CD14-positive monocyte (primary cell): ENCODE measurements at regions of chr18 and their contacts with region 1.

Region 1: DNA sequence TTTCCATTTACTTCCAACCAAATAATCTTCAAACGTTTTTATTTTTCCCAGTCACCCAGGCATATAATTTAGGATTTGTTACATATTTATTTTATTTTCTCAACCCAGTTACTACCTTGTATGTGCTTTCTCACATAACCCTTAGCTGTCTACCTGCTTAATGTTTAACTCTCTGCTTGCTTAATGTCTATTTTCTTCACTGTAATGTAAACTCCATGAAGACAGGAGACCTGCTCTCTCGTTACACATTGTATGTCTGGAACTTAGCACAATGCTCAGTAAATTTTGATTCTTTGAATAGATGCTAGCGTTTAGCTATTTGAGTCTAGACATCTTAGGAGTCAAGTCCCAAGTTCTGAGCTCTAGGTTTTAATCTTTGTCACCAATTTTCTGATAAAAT is 70.2 kb downstream of the RBBP8 start:
- DNase-seq: no peak
- H3K4me3 ChIP-seq: no peak overlapping the region
- H3K4me3 Mint-ChIP-seq: no peak overlapping the region
- H3K27ac ChIP-seq: no peak overlapping the region
- H3K27ac Mint-ChIP-seq: no peak overlapping the region
- H3K4me1 ChIP-seq: no peaks in the 10 kb centered on the region
- H3K4me1 Mint-ChIP-seq: no peaks in the 10 kb centered on the region
- H3K27me3 ChIP-seq: no peaks in the 10 kb centered on the region
- H3K27me3 Mint-ChIP-seq: no peaks in the 10 kb centered on the region
- CTCF ChIP-seq: no peak

Region 2: DNA sequence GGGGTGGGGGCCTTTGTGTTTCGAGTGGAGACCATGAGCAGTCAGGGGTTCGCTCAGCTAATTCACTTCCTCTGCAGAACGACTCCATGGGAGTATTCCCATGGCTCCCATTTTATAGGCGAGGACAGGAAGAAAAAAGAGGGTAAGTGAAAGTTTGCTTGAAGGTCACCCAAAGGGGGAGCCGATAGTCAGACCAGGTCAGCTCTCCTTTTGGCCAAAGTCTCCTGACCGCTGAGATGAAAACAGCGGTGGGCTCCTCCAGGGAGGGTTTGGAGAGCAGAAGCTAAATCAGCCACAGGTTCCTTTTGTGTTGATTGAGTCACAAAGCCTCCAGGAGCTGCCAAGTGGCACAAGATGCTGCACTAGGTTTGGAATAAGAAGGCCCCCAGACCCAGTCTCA is 551.5 kb before region 1 on chr18:
- intact Hi-C with region 1: no loop called
- DNase-seq: no peak
- H3K4me3 ChIP-seq: no peak overlapping the region
- H3K4me3 Mint-ChIP-seq: no peak overlapping the region
- H3K27ac ChIP-seq: no peak overlapping the region
- H3K27ac Mint-ChIP-seq: no peak overlapping the region
- H3K4me1 ChIP-seq: no peaks in the 10 kb centered on the region
- H3K4me1 Mint-ChIP-seq: no peaks in the 10 kb centered on the region
- H3K27me3 ChIP-seq: no peaks in the 10 kb centered on the region
- H3K27me3 Mint-ChIP-seq: peaks cover 2 to 5% (median 2%) of the 10 kb centered on the region in 3 donors
- CTCF ChIP-seq: no peak

Region 3: DNA sequence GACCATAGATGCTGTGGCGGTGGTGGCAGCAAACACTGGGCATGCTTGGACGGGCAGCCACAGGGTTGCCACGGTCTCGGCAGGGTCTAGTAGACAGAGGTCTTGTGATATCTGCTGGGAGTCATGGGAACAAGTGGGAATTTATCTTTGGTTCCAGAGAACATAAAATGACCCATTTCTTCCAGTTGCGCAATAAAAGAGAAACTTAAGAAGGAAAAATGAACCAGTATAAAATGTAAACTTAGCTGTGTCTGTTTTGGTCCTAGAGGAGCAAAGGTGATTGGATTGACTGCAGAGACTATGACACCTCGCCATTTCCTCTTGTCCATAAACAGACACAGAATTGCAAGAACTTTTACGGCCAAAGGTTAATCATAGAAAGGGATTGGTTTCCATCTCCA is 202.7 kb before region 1 on chr18:
- intact Hi-C with region 1: loop called in 1 of 2 experiments (anchors 10 kb)
- DNase-seq: no peak
- H3K4me3 ChIP-seq: no peak overlapping the region
- H3K4me3 Mint-ChIP-seq: no peak overlapping the region
- H3K27ac ChIP-seq: no peak overlapping the region
- H3K27ac Mint-ChIP-seq: no peak overlapping the region
- H3K4me1 ChIP-seq: no peaks in the 10 kb centered on the region
- H3K4me1 Mint-ChIP-seq: no peaks in the 10 kb centered on the region
- H3K27me3 ChIP-seq: no peaks in the 10 kb centered on the region
- H3K27me3 Mint-ChIP-seq: peaks cover 2 to 4% (median 4%) of the 10 kb centered on the region in 3 donors
- CTCF ChIP-seq: no peak

Region 4: GRCh38 chr18:23183411-23184155 is 180.3 kb after region 1 on chr18:
- intact Hi-C with region 1: no loop called
- DNase-seq: no peak
- H3K4me3 ChIP-seq: no peak overlapping the region
- H3K4me3 Mint-ChIP-seq: no peak overlapping the region
- H3K27ac ChIP-seq: no peak overlapping the region
- H3K27ac Mint-ChIP-seq: no peak overlapping the region
- H3K4me1 ChIP-seq: no peaks in the 10 kb centered on the region
- H3K4me1 Mint-ChIP-seq: no peaks in the 10 kb centered on the region
- H3K27me3 ChIP-seq: no peaks in the 10 kb centered on the region
- H3K27me3 Mint-ChIP-seq: no peaks in the 10 kb centered on the region
- CTCF ChIP-seq: no peak

Region 5: GRCh38 chr18:23380001-23380550 is 376.8 kb after region 1 on chr18:
- intact Hi-C with region 1: no loop called
- DNase-seq: no peak
- H3K4me3 ChIP-seq: no peak overlapping the region
- H3K4me3 Mint-ChIP-seq: no peak overlapping the region
- H3K27ac ChIP-seq: no peak overlapping the region
- H3K27ac Mint-ChIP-seq: no peak overlapping the region
- H3K4me1 ChIP-seq: no peaks in the 10 kb centered on the region
- H3K4me1 Mint-ChIP-seq: no peaks in the 10 kb centered on the region
- H3K27me3 ChIP-seq: no peaks in the 10 kb centered on the region
- H3K27me3 Mint-ChIP-seq: peaks cover 0 to 2% (median 0%) of the 10 kb centered on the region in 3 donors
- CTCF ChIP-seq: no peak